BJ (cell line): ENCODE measurements at regions of chr18 and their contacts with region 1.

Region 1: DNA sequence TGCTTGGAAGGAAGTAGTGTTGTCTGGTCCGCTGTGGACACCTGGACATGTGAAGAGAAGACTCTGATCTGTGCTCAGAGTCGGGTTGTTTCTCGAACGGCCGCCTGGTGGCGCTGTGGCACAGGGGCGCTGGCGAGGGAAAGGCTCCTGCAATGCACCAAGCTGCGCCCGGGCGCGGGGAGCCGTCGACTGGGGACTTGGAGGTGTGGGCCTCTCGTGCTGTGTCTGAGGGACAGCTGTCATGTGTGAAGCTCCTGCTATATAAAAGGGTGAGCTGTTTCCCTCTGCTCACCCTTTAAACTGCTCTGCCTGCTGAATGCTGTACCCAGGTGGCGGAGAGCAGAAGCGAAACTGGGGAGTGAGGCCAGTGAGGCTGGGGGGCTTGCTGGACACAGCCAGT is 44.0 kb downstream of the GNAL start:
- DNase-seq: no peak
- H3K4me3 ChIP-seq: peak overlapping the region; percentile 25
- H3K27me3 ChIP-seq: peaks cover 4% of the 10 kb centered on the region; the same call in 1 of the 2 replicates
- CTCF ChIP-seq: peak; percentile 96

Region 2: DNA sequence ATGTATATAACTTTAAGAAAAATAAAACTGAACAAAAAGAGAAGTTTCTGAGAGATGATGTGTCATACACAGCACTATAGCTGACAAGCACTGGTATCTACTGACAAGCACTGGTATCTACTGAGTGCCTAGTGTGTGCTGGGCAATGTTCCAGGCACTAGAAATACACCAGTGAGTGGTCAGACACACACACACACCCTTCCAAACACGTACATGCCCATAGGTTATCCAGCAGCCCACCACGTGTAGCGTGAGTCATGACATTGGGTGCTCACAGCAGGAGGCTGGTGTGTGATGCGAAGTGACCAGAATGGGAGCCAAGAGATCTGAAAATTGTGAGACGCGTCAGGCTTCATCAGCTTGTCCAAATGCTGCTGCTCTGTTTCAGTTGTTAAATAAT is 56.2 kb before region 1 on chr18:
- CTCF ChIA-PET with region 1: no interaction called
- POLR2A ChIA-PET with region 1: no interaction called
- DNase-seq: no peak
- H3K4me3 ChIP-seq: no peak overlapping the region
- H3K27me3 ChIP-seq: no peaks in the 10 kb centered on the region
- CTCF ChIP-seq: no peak

Region 3: GRCh38 chr18:11721720-11722119 is 11.3 kb before region 1 on chr18:
- CTCF ChIA-PET with region 1: interaction called, 11 read pairs
- POLR2A ChIA-PET with region 1: no interaction called
- DNase-seq: no peak
- H3K4me3 ChIP-seq: no peak overlapping the region
- H3K27me3 ChIP-seq: no peaks in the 10 kb centered on the region
- CTCF ChIP-seq: no peak

Region 4: GRCh38 chr18:11745521-11745920 is 12.5 kb after region 1 on chr18:
- CTCF ChIA-PET with region 1: interaction called, 15 read pairs
- POLR2A ChIA-PET with region 1: no interaction called
- DNase-seq: no peak
- H3K4me3 ChIP-seq: no peak overlapping the region
- H3K27me3 ChIP-seq: peaks cover 4% of the 10 kb centered on the region
- CTCF ChIP-seq: no peak

Region 5: DNA sequence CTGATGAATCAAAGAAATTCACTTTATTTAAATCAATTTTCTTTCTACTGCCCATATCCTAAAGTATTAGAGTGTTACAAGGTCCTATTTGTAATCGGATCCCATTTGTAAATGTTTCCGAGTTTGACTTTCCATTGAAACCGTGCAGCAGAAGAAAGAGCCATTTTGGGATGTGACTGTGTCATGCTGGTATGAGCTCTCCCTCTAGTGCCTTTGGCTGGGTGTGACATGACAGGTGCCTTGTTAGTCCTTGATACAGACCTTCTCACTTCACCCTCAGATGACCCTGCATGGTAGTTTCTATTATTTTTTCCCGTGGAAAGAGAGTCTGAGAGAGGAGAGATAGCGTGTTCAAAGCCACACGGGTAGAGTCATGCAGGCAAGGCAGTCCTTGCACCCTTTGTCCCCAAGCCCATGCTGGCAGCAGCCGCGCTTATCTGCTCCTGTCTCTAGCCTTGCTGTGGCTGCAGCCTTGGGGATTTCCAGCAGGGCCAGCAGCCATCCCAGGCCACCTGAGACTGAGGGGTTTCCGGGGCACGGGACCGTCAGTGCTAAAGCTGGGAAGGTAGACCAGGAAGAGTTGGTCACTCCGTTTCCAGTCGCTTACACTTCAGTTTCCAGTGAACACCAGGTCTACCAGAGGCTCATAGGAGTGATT is 139.6 kb after region 1 on chr18:
- CTCF ChIA-PET with region 1: interaction called, 12 read pairs
- POLR2A ChIA-PET with region 1: no interaction called
- DNase-seq: no peak
- H3K4me3 ChIP-seq: no peak overlapping the region
- H3K27me3 ChIP-seq: no peaks in the 10 kb centered on the region
- CTCF ChIP-seq: peak; percentile 34; the same call in 1 of the 2 replicates